ENCODE measurements at regions of chr1 and their contacts with region 1.

Region 1: DNA sequence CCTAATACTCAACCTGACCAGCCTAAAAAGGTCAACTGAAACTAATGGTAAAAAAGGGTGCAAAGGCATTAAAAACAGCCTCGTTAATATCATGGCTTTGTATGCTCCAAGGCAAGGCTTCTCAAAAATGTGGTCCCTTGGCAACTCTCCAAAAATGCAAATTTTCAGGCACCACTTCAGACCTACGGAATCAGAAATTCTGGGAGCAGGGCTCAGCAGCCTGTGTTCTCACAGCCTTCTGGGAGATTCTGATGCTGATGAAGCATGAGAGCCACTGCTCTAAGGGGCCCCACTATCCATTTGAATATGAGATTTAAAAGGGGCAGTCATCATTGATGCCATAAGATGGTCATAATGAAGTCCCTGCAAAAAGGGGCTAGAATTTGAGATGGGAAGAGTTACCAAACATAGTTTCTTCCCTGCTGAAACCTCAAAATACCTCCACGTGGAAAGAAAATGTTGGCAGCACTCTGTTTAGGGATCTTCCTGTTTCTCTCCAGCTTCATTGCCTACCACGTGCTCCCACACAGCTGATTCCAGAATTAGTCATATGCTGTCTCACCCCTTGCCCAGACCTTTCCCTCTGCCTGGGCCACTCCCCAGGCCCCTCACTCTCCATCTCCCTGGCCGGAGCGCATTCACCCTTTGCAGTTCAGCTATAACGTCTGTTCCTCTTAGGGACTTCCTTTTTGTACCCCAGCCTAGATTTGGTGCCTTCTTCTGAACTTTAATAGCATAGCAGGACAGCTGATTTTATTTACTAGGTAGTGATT is 46.7 kb downstream of the PHC2 start:
- DNase-seq: peak; percentile 57
- H3K4me3 Mint-ChIP-seq: no peak overlapping the region
- H3K27ac Mint-ChIP-seq: peak overlapping the region; percentile 61
- H3K4me1 Mint-ChIP-seq: peaks cover 42% of the 10 kb centered on the region
- H3K27me3 Mint-ChIP-seq: no peaks in the 10 kb centered on the region
- CTCF ChIP-seq: no peak

Region 2: DNA sequence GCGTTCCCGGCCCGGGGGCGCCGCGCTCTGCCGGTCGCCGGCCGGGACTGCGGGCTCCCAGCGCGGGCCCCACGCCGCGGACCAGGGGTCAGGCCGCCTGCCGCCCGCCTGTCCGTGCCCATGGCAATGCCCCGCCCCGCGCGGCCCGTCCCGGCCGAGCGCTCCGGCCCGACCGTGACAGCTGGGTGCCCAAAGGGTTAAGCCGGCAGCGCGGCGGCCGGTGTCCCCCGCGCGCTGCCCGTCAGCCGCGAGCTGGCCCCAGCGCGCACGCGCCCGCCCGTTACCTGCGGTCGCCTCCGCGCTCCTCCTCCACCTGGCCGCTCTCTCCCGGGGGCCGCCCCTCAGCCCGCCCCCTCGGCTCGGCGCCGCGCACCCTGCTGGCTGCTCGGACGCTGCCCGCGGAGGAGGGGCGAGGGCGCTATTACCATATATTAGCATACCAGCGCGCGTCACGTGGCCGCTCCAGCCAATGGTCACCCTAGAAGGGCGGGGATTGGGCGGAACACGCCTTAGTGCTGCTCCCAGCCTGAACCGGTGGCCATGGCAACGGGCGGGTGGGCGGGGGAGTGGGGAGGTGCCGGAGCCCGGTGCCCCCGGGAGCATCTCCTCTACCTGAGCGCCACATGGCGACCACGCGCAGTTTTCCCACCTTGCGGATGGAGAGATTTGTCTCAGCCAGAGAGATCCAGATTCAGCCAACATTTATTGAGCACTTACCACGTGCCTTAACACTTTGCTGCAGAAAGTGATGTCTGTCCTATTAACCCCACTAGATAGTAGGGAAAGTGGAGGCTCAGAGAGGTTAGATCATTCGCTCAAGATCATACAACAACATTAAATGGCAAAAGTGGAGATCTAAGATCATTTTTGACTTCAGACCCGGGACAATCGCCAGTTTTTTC is 46.7 kb after region 1 on chr1 and contains the start of gene PHC2:
- CTCF ChIA-PET with region 1: no interaction called
- POLR2A ChIA-PET with region 1: interaction called, 3 read pairs
- intact Hi-C with region 1: loop called (anchors 5 kb)
- DNase-seq: peak; percentile 97
- H3K4me3 Mint-ChIP-seq: no peak within 1 kb of the TSS
- H3K27ac Mint-ChIP-seq: no peak within 1 kb of the TSS
- H3K4me1 Mint-ChIP-seq: peaks cover 21% of the 10 kb centered on the region
- H3K27me3 Mint-ChIP-seq: no peaks in the 10 kb centered on the region
- CTCF ChIP-seq: no peak
- total RNA-seq, gene PHC2: 117 and 137 TPM in 2 replicates